WTC11 (cell line): ENCODE measurements at regions of chr1 and their contacts with region 1.

Region 1: DNA sequence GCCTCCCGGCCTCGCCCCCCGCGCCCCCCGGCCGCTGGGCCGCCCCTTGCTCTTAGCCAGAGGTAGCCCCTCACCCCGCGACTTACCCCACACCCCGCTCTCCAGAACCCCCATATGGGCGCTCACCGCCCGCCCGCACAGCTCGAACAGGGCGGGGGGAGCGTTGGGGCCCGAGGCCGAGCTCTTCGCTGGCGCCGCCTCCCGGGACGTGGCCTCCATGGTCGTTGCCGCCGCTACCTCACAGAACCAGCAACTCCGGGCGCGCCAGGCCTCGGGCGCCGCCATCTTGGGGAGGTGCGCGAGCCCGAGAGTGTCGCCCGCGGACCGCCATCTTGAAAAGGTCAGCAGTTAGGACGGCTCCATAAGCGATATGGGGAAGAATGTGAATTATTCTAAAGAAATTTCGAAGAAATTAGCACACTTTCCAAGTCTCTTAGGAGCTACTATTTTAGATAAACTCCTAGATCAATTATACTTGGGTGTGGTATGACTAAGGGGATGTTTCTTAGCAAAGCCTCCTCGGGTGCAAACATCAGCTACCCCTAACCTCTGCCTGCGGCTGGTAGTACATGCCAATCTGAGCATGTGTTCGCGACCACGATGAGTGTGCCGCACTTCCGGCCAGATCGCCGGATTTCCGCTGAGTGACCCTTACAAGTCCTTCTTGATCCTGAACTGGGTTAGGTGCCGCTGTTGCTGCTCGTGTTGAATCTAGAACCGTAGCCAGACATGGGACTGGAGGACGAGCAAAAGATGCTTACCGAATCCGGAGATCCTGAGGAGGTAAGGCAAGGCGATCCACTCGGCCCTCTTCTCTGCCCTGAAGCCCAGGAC is at the starts of genes LRRC41 and UQCRH:
- DNase-seq: peak; percentile 94
- ATAC-seq: peak; percentile 72
- H3K4me3 Mint-ChIP-seq: peak within 1 kb of the TSS; percentile 100
- H3K27ac Mint-ChIP-seq: peak within 1 kb of the TSS; percentile 98
- H3K4me1 Mint-ChIP-seq: peaks cover 58% of the 10 kb centered on the region
- H3K27me3 Mint-ChIP-seq: no peaks in the 10 kb centered on the region
- CTCF ChIP-seq: no peak
- total RNA-seq, gene LRRC41: 44.8 to 46.2 TPM (median 46.0 TPM) in 3 replicates
- total RNA-seq, gene UQCRH: 584 to 663 TPM (median 611 TPM) in 3 replicates

Region 2: GRCh38 chr1:46274223-46275029 is 28.8 kb before region 1 on chr1:
- CTCF ChIA-PET with region 1: no interaction called
- POLR2A ChIA-PET with region 1: no interaction called
- DNase-seq: no peak
- ATAC-seq: no peak
- H3K4me3 Mint-ChIP-seq: no peak overlapping the region
- H3K27ac Mint-ChIP-seq: no peak overlapping the region
- H3K4me1 Mint-ChIP-seq: no peaks in the 10 kb centered on the region
- H3K27me3 Mint-ChIP-seq: no peaks in the 10 kb centered on the region
- CTCF ChIP-seq: no peak

Region 3: GRCh38 chr1:46340404-46341221 is 37.4 kb after region 1 on chr1 and contains the start of gene NSUN4:
- CTCF ChIA-PET with region 1: interaction called, 8 read pairs
- POLR2A ChIA-PET with region 1: interaction called, 13 read pairs
- DNase-seq: peak; percentile 78
- ATAC-seq: peak; percentile 94
- H3K4me3 Mint-ChIP-seq: peak within 1 kb of the TSS; percentile 97
- H3K27ac Mint-ChIP-seq: peak within 1 kb of the TSS; percentile 100
- H3K4me1 Mint-ChIP-seq: peaks cover 17% of the 10 kb centered on the region
- H3K27me3 Mint-ChIP-seq: no peaks in the 10 kb centered on the region
- CTCF ChIP-seq: no peak; the same call in 1 of the 2 replicates
- total RNA-seq, gene NSUN4: 19.5 to 22.6 TPM (median 21.0 TPM) in 3 replicates

Region 4: GRCh38 chr1:46364612-46365011 is 61.4 kb after region 1 on chr1:
- CTCF ChIA-PET with region 1: no interaction called
- POLR2A ChIA-PET with region 1: no interaction called
- DNase-seq: no peak
- ATAC-seq: no peak
- H3K4me3 Mint-ChIP-seq: no peak overlapping the region
- H3K27ac Mint-ChIP-seq: no peak overlapping the region
- H3K4me1 Mint-ChIP-seq: peaks cover 4% of the 10 kb centered on the region
- H3K27me3 Mint-ChIP-seq: no peaks in the 10 kb centered on the region
- CTCF ChIP-seq: no peak